Endothelial cell of umbilical vein (primary cell): ENCODE measurements at regions of chr18 and their contacts with region 1.

Region 1: GRCh38 chr18:25896178-25896780 is 194.1 kb downstream of the SS18 start:
- DNase-seq: peak; percentile 62
- H3K4me3 ChIP-seq: no peak overlapping the region
- H3K27ac ChIP-seq: no peak overlapping the region
- H3K4me1 ChIP-seq: no peaks in the 10 kb centered on the region
- H3K27me3 ChIP-seq: peaks cover 8 to 13% of the 10 kb centered on the region in 2 experiments
- CTCF ChIP-seq: peak; percentile 61 to 77
- POLR2A ChIP-seq: no peak

Region 2: GRCh38 chr18:24543805-24544498 is 1352.3 kb before region 1 on chr18:
- CTCF ChIA-PET with region 1: interaction called, 16 read pairs
- POLR2A ChIA-PET with region 1: no interaction called
- dilution Hi-C with region 1: no loop called
- intact Hi-C with region 1: loop called (anchors 1 kb)
- DNase-seq: peak; percentile 42
- H3K4me3 ChIP-seq: no peak overlapping the region
- H3K27ac ChIP-seq: no peak overlapping the region
- H3K4me1 ChIP-seq: no peaks in the 10 kb centered on the region
- H3K27me3 ChIP-seq: peaks cover 5 to 7% of the 10 kb centered on the region in 2 experiments
- CTCF ChIP-seq: peak; percentile 30 to 32
- POLR2A ChIP-seq: no peak

Region 3: GRCh38 chr18:24878289-24878688 is 1018.0 kb before region 1 on chr18:
- CTCF ChIA-PET with region 1: interaction called, 11 read pairs
- POLR2A ChIA-PET with region 1: no interaction called
- dilution Hi-C with region 1: no loop called
- intact Hi-C with region 1: loop called (anchors 1 kb)
- DNase-seq: peak; percentile 75
- H3K4me3 ChIP-seq: no peak overlapping the region
- H3K27ac ChIP-seq: no peak overlapping the region
- H3K4me1 ChIP-seq: peaks cover 11% of the 10 kb centered on the region
- H3K27me3 ChIP-seq: no peaks in the 10 kb centered on the region
- CTCF ChIP-seq: peak; percentile 23 to 44
- POLR2A ChIP-seq: no peak

Region 4: DNA sequence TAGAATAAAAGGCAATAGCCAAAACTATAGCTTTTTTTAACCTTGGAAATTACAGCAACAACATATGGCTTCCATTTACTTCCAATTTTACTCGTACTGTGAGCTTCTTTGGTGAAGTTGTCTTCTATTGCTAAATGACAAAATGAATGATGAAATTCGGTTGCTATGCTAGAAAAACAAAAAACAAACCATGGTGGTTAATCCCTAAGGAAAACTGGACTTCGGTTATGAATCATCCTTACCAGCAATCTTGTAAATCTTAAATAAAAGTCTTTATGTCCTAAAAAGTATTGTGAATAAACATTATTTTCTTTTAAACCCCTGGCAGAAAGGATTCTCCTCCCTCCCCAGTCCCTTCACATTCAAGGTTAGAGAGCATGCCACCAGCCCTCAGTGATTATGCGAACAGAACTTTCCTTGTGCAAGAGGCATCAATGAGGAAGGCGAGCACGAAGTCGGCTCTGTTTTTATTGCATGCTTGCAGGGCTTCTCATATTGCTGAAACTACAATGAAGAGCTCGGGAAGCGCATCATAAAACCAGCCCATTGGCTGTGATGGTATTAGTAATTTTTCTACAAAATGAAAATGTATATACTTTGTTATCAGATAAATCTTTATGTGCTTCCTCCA is 607.2 kb before region 1 on chr18:
- CTCF ChIA-PET with region 1: no interaction called
- POLR2A ChIA-PET with region 1: no interaction called
- dilution Hi-C with region 1: no loop called
- intact Hi-C with region 1: loop called (anchors 10 kb)
- DNase-seq: peak; percentile 88
- H3K4me3 ChIP-seq: no peak overlapping the region
- H3K27ac ChIP-seq: peak overlapping the region; percentile 75
- H3K4me1 ChIP-seq: peaks cover 43% of the 10 kb centered on the region
- H3K27me3 ChIP-seq: no peaks in the 10 kb centered on the region
- CTCF ChIP-seq: no peak
- POLR2A ChIP-seq: no peak

Region 5: DNA sequence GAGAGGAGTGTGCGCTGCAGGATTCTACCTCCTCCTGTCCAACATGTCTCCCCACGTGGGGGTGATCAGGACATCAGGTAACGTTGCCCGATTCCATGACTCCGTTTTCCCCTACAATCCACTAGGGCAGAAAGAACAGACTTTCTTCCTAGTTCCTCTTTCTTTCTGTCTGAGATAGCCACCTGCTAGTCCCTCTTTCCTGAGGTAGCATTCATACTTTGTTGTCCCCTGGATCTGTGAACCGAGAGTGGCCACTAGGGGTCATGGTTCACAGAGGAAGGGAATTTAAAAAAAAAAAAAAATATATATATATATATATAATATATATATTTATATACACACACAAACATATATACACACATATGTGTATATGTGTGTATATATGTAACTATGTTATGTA is 334.4 kb before region 1 on chr18:
- CTCF ChIA-PET with region 1: interaction called, 3 read pairs
- POLR2A ChIA-PET with region 1: no interaction called
- dilution Hi-C with region 1: no loop called
- intact Hi-C with region 1: loop called (anchors 10 kb)
- DNase-seq: peak; percentile 15
- H3K4me3 ChIP-seq: no peak overlapping the region
- H3K27ac ChIP-seq: no peak overlapping the region
- H3K4me1 ChIP-seq: peaks cover 7% of the 10 kb centered on the region
- H3K27me3 ChIP-seq: peaks cover 0 to 2% of the 10 kb centered on the region in 2 experiments
- CTCF ChIP-seq: peak in 1 of 2 donors; percentile 15
- POLR2A ChIP-seq: no peak